Activated CD4-positive, alpha-beta T cell treated with anti-CD3 and anti-CD28 coated beads for 36 hours (primary cell): ENCODE measurements at regions of chr20 and their contacts with region 1.

Region 1: DNA sequence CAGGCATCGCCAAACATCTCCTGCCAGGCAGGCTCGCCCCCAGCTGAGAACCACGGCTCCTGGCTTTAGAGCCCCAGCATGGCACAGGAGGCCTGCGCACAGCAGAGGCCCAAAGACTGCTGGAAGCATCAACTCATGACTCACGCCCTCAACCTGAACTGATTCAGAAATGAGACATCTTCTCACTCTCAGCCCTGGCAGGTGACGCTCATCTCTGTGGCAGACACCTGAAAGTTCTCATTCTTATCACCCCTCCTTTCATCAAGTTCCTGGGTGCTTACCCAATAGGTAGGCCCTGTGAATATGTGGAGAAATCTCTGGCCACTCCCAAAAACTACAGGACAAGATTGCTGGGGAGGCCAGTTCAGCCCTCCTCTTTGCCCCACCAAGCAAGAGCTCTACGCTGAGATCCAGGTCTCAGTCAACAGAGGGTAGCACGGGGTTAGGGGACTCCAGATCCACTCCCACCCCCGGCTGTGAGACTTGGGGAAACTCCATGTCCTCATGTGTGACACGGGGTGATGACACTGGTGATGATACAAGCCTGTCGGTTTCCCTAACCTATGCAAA is 11.3 kb downstream of the NFATC2 start:
- DNase-seq: peak; percentile 90
- ATAC-seq: peak; percentile 82
- H3K4me3 Mint-ChIP-seq: peak overlapping the region; percentile 75
- H3K27ac Mint-ChIP-seq: peak overlapping the region; percentile 99
- H3K4me1 Mint-ChIP-seq: peaks cover 99% of the 10 kb centered on the region
- H3K27me3 Mint-ChIP-seq: no peaks in the 10 kb centered on the region

Region 2: GRCh38 chr20:51423290-51423667 is 107.9 kb before region 1 on chr20:
- CTCF ChIA-PET with region 1: no interaction called
- POLR2A ChIA-PET with region 1: no interaction called
- intact Hi-C with region 1: loop called (anchors 1 to 2 kb)
- DNase-seq: peak; percentile 71
- ATAC-seq: peak; percentile 77
- H3K4me3 Mint-ChIP-seq: no peak overlapping the region
- H3K27ac Mint-ChIP-seq: peak overlapping the region; percentile 92
- H3K4me1 Mint-ChIP-seq: peaks cover 84% of the 10 kb centered on the region
- H3K27me3 Mint-ChIP-seq: no peaks in the 10 kb centered on the region

Region 3: GRCh38 chr20:51500311-51500710 is 30.9 kb before region 1 on chr20:
- CTCF ChIA-PET with region 1: interaction called, 7 read pairs
- POLR2A ChIA-PET with region 1: interaction called, 18 read pairs
- intact Hi-C with region 1: loop called (anchors 1 kb)
- DNase-seq: peak; percentile 74
- ATAC-seq: peak; percentile 72
- H3K4me3 Mint-ChIP-seq: no peak overlapping the region
- H3K27ac Mint-ChIP-seq: peak overlapping the region; percentile 91
- H3K4me1 Mint-ChIP-seq: peaks cover 82% of the 10 kb centered on the region
- H3K27me3 Mint-ChIP-seq: no peaks in the 10 kb centered on the region

Region 4: DNA sequence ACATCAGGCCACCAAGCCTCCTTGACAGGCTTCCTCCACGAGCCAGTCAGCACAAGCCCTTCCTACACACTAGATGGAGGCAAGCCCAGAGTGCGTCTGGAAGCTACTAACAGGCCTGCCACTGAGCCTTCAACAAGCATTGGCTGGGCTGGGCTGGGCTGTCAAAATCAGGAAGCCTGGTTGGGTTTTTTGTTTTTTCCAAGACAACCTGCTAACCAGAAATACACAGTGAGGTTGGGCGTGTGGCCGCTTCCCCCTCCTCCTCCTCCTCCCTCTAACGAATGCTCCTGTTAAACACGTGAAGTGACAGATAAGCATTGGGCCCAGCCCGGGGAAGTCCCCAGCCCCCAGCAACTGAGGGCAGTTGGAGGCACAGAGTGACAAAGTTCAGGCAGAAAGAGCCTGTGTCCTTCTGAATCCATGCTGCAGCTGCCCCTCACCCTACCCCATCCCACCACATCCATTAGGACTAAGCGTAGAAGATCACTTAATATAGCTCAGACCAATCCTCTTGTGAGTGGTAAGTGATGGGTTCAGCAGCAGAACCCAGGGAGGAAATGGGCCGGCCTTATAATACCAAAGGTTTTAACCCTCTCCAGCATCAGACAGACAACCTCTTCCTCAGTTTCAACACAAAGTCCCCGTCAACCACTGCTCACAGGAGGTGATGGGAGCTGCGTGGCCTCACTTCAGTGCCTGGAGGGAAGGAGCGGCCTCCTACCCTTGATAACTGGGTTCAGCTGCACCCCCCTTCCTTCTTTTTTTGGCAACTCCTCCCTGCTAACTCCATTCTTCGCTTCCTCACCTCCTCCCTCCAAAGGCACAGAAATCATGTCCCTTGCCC is 10.2 kb after region 1 on chr20:
- CTCF ChIA-PET with region 1: interaction called, 6 read pairs
- POLR2A ChIA-PET with region 1: interaction called, 59 read pairs
- intact Hi-C with region 1: loop called (anchors 1 kb)
- DNase-seq: peak; percentile 90
- ATAC-seq: peak; percentile 84
- H3K4me3 Mint-ChIP-seq: peak overlapping the region; percentile 97
- H3K27ac Mint-ChIP-seq: peak overlapping the region; percentile 99
- H3K4me1 Mint-ChIP-seq: peaks cover 43% of the 10 kb centered on the region
- H3K27me3 Mint-ChIP-seq: peaks cover 8% of the 10 kb centered on the region

Region 5: GRCh38 chr20:51595058-51595532 is 63.9 kb after region 1 on chr20:
- CTCF ChIA-PET with region 1: no interaction called
- POLR2A ChIA-PET with region 1: no interaction called
- intact Hi-C with region 1: loop called (anchors 2 kb)
- DNase-seq: peak; percentile 89
- ATAC-seq: peak; percentile 93
- H3K4me3 Mint-ChIP-seq: no peak overlapping the region
- H3K27ac Mint-ChIP-seq: peak overlapping the region; percentile 72
- H3K4me1 Mint-ChIP-seq: peaks cover 54% of the 10 kb centered on the region
- H3K27me3 Mint-ChIP-seq: no peaks in the 10 kb centered on the region

Region 6: DNA sequence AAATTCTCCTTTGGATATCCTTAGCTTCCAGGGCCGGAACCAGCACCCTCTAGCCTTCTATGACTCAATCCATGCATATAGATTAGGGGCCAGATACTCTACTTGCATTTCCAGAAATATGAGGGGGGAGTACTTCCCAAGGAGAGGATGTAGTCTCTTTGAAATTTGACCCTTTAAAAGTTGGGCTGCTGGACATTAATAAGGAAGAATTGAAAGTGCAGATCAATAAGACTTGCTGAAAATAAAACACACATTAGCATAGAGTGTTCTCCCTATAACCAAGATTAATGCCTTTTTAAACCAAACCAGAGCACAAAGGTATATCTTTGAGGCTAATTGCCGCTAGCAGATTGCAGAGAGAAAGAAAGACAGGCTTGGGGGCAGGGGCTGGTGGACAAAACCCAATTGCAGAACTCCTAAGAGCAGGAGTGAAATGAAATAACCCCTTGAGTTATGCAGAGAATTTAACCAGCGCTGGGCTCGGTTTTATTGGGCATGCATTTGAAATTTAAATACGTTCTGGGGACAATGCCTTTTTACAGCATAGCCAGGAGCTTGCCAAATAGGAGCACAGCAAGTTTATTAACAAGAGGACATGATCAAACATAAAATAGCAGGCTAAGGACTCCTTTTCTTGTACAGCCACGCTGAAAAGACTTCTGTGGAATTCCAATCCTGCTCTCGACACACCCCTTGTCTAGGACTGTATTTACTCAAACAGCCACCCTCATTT is 379.3 kb after region 1 on chr20:
- CTCF ChIA-PET with region 1: no interaction called
- POLR2A ChIA-PET with region 1: no interaction called
- intact Hi-C with region 1: no loop called
- DNase-seq: no peak
- ATAC-seq: no peak
- H3K4me3 Mint-ChIP-seq: no peak overlapping the region
- H3K27ac Mint-ChIP-seq: no peak overlapping the region
- H3K4me1 Mint-ChIP-seq: no peaks in the 10 kb centered on the region
- H3K27me3 Mint-ChIP-seq: peaks cover 15% of the 10 kb centered on the region